Motor neuron (in vitro differentiated cells): ENCODE measurements at regions of chr13 and their contacts with region 1.

Region 1: DNA sequence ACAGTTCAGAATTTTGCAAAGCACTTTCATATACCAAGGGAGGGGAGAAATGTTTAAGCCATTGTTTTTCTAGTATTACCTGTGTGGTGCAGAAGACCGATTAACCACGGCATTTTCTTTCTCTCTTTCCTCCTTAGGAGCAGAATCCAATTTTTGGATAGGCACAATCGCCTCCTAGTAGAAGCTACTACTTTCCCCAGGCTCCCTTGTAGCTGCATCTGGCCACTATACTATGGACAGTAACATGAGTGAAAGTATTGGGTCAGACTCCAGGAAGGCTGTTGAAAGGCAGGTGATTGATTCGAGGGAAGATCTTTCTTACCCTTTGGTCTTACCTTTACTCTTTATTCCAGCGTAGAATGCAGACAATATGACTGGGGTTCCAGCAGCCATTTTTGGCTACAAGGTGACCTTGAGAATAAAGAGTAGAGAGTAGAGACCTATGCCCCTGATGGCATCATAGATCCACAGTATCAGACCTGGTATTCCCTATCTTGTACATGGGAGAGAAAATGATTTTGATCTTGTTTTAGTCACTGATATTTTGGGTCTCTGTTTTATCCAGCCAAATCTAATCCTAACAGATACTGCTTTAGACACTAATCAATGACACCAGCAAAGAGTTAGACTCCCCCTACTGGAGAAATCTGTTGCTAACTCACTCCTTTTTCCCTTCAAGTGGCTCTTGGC is 77.0 kb downstream of the LRRC63 start:
- ATAC-seq: peak in 6 of 8 experiments; percentile 34 to 88 (median 77)
- H3K4me3 ChIP-seq: no peak overlapping the region
- H3K27ac ChIP-seq: no peak overlapping the region
- H3K4me1 ChIP-seq: no peaks in the 10 kb centered on the region

Region 2: GRCh38 chr13:46160471-46161066 is 128.1 kb before region 1 on chr13:
- in situ Hi-C with region 1: loop called in 1 of 9 experiments (anchors 10 kb)
- ATAC-seq: peak in 4 of 8 experiments; percentile 41 to 78 (median 72)
- H3K4me3 ChIP-seq: no peak overlapping the region
- H3K27ac ChIP-seq: no peak overlapping the region
- H3K4me1 ChIP-seq: no peaks in the 10 kb centered on the region